Activated T-helper 1 cell treated with anti-CD3 and anti-CD28 coated beads, Interleukin-12 subunit alpha, Interleukin-12 subunit beta, Interleukin-2, Interleukin-4 antibody, amounts not matched to agents 30 ng/mL and 10 ng/mL and 1 ng/mL, durations not matched to agents 14 hours and 24 hours and 36 hours (primary cell): ENCODE measurements at regions of chr16 and their contacts with region 1.

Region 1: DNA sequence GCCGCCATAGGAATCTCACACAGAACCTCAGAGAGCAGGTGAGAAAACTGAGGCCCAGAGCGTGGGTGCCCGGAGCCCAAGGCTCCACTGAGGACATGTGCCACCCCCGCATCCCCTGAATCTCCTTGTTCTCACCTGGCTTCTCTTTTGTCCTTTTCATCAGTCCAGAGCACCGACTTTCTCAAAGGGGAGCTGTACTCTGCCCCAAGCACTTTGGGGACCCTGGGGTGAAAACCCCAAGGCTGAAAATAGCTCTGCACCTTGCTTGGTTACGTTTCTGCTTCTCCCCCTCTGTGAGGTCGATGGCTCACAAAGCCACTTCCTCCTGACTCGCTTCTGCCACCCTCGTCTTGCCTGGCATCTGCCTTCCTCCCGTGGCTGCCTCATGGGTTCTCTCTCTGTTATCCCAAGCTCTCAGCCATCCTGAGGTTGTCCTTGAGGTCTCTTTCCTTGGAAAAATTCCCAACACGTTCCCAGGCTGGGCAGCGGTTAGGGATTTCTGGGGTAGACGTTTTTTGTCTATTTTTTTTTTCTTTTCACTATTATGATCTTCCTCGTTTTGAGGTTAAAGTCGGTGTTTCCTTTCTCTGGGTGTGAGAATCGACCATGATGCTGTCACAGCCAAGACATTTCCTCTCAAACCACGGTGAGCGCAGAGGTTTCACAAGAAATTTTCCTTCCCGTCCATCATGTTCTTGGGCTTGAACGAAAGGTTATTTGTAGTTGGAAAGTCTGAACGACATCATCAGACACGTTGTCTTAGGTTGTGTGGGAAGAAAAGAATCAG is 37.2 kb downstream of the IRF8 start:
- DNase-seq: peak; percentile 62
- H3K4me3 Mint-ChIP-seq: peak overlapping the region; percentile 8
- H3K27ac Mint-ChIP-seq: peak overlapping the region; percentile 90
- H3K4me1 Mint-ChIP-seq: peaks cover 55% of the 10 kb centered on the region
- H3K27me3 Mint-ChIP-seq: peaks cover 3% of the 10 kb centered on the region

Region 2: GRCh38 chr16:85055503-85056210 is 880.5 kb before region 1 on chr16:
- intact Hi-C with region 1: loop called (anchors 5 kb)
- DNase-seq: peak; percentile 75
- H3K4me3 Mint-ChIP-seq: peak overlapping the region; percentile 60
- H3K27ac Mint-ChIP-seq: peak overlapping the region; percentile 84
- H3K4me1 Mint-ChIP-seq: peaks cover 31% of the 10 kb centered on the region
- H3K27me3 Mint-ChIP-seq: peaks cover 10% of the 10 kb centered on the region

Region 3: DNA sequence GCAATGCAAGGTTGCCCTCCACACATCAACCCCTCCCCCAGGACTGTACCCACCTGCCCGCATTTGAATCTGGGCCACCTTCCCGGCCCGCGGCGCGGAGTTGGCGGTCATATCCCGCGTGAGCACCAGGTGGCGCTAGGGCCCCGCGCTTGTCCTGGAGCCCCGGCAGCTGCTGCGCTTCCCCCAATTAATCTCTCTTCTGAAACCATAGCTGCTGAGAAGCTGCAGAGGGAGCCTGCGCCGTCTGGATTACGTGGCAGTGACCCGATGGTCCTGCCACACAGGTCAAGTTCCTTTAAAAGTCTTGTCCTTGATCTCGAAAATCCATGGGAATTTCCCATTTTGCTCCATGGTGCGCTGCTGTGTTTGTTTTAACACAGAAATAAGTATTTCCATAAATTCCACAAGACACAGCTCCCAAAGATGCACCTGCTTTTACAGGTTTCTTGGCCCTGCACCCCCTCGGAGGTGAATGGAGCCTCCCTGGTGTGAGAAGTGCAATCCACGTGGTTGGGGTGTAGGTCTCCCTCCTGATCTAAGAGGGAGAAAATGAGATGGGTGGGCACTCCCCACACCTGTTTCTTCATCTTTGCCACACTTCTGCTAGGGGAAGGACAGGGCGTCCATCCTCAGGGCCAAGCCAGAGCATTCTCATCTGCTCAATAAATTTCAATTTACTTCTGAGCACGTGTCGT is 114.6 kb before region 1 on chr16:
- intact Hi-C with region 1: loop called (anchors 1 kb)
- DNase-seq: peak; percentile 68
- H3K4me3 Mint-ChIP-seq: no peak overlapping the region
- H3K27ac Mint-ChIP-seq: no peak overlapping the region
- H3K4me1 Mint-ChIP-seq: no peaks in the 10 kb centered on the region
- H3K27me3 Mint-ChIP-seq: peaks cover 8% of the 10 kb centered on the region

Region 4: GRCh38 chr16:85888405-85889331 is 47.5 kb before region 1 on chr16:
- intact Hi-C with region 1: loop called (anchors 1 kb)
- DNase-seq: peak; percentile 18
- H3K4me3 Mint-ChIP-seq: peak overlapping the region; percentile 43
- H3K27ac Mint-ChIP-seq: peak overlapping the region; percentile 67
- H3K4me1 Mint-ChIP-seq: peaks cover 38% of the 10 kb centered on the region
- H3K27me3 Mint-ChIP-seq: peaks cover 21% of the 10 kb centered on the region

Region 5: DNA sequence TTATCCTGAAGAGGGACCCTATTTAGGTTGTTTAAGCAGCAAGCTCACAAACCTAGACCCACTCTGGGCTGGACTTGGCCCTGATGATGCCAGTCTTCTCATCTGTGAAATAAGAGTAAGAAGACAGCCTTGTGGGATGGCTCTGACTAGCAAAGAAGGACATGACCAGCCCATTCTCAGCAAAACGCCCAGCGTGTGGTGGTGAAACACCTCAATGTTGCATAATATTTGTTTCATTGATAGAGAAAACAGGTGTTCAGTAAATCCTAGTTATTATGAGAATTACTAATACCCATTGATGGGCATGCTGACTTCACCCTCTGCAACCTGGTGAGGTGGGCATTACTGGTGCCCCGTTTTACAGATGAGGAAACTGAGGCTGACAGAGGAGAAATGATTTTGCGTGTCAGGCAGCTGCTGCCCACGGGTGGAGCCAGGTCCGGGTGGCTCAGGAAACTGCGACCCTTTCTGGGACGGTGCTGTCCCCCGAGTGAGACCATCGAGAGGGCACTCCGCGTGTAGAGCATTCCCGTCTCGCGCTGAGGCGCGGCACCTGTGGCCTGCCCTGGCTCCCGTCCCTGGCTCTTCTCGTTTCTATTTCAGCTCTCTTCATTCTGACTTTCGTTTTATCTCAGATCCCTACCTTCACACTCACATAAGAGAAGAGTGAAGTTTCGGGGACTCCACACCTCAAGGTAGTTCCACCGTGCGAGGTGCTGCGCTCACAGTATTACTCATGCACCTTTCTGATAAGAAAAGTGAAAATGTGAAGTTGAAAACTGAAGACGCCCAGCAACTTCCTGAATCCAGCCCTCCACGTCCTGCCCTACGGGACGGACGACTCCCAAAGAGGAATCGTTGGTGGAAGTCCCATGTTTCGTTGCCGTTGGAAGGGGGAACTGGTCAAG is 11.3 kb after region 1 on chr16:
- intact Hi-C with region 1: loop called (anchors 1 kb)
- DNase-seq: peak; percentile 20
- H3K4me3 Mint-ChIP-seq: peak overlapping the region; percentile 40
- H3K27ac Mint-ChIP-seq: peak overlapping the region; percentile 59
- H3K4me1 Mint-ChIP-seq: peaks cover 58% of the 10 kb centered on the region
- H3K27me3 Mint-ChIP-seq: peaks cover 12% of the 10 kb centered on the region

Region 6: GRCh38 chr16:85982563-85982939 is 46.4 kb after region 1 on chr16:
- intact Hi-C with region 1: no loop called
- DNase-seq: no peak
- H3K4me3 Mint-ChIP-seq: no peak overlapping the region
- H3K27ac Mint-ChIP-seq: no peak overlapping the region
- H3K4me1 Mint-ChIP-seq: peaks cover 42% of the 10 kb centered on the region
- H3K27me3 Mint-ChIP-seq: peaks cover 3% of the 10 kb centered on the region

Region 7: GRCh38 chr16:86007524-86007923 is 71.4 kb after region 1 on chr16:
- intact Hi-C with region 1: loop called (anchors 1 kb)
- DNase-seq: no peak
- H3K4me3 Mint-ChIP-seq: no peak overlapping the region
- H3K27ac Mint-ChIP-seq: no peak overlapping the region
- H3K4me1 Mint-ChIP-seq: peaks cover 17% of the 10 kb centered on the region
- H3K27me3 Mint-ChIP-seq: no peaks in the 10 kb centered on the region